ENCODE measurements at regions of chr7 and their contacts with region 1.

Region 1: DNA sequence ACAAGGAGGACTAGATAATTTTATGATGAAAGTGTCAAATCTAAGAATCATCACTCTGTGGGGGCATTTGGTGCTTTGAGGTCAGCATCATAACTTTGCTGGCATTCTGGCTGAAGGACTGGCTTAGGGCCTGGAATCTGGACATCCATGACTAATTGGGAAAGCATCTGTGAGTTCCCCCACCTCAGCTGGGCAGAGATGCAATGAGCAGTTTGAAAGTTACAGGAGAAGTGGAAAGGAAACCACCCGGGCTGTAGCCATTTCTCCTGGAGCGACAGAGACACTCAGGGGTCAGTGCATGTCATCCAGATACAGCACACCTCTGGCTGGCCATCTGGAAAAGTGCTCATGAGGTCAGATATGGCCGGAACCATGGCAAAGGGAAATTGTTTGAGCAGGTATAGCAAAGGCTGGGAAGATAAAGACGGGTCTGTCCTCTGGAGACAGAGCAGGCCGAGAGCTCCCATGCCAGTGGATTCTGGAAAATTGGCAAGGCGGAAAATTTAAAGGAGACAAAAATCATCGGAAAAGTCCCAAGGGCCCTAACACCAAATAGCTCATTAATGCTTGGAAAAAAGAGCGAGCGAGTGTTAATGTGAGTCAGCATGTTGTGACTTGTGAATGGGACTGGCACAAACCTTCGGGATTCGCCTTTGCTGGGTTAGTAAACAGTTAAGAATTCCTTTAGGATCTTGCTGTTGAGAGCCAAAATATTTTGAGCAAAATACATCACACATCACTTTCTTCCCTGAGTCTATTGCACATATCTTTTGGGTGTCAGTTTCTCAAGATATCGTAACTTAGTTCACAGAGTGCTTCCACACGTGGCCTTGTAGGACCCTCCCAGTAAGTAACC is 188.4 kb upstream of the AGK start:
- DNase-seq: peak in 3 of 5 donors; percentile 31 to 50 (median 33)
- ATAC-seq: peak; percentile 27 to 63 (median 58)
- H3K4me3 ChIP-seq: no peak overlapping the region
- H3K27ac ChIP-seq: peak overlapping the region; percentile 24 to 87 (median 62)
- H3K4me1 ChIP-seq: peaks cover 0 to 74% (median 26%) of the 10 kb centered on the region in 12 donors
- H3K27me3 ChIP-seq: no peaks in the 10 kb centered on the region
- CTCF ChIP-seq: no peak
- POLR2A ChIP-seq: no peak

Region 2: DNA sequence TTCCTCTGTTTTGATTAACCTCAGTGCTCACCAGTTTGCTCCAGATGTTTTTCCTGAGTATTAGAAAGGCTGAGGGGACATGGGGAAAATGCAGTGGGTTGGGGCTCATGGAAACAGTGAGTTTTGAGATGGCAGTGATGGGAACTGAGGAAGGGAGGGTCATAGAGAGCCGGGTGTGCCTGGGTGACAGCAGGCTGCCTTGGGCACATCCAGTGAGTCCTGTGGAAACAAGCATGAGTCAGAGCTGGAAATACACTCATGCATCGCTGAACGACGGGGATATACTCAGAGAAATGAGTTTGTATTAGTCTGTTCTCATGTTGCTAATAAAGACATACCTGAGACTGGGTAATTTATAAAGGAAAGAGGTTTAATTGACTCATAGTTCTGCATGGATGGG is 86.8 kb before region 1 on chr7:
- intact Hi-C with region 1: loop called in 3 of 10 experiments (anchors 5 to 10 kb)
- DNase-seq: peak in 1 of 5 donors; percentile 59
- ATAC-seq: peak in 3 of 4 donors; percentile 68 to 90 (median 86)
- H3K4me3 ChIP-seq: no peak overlapping the region
- H3K27ac ChIP-seq: no peak overlapping the region
- H3K4me1 ChIP-seq: peaks cover 0 to 15% (median 0%) of the 10 kb centered on the region in 12 donors
- H3K27me3 ChIP-seq: no peaks in the 10 kb centered on the region
- CTCF ChIP-seq: no peak
- POLR2A ChIP-seq: no peak

Region 3: GRCh38 chr7:141291541-141291940 is 71.3 kb before region 1 on chr7:
- intact Hi-C with region 1: loop called in 1 of 10 experiments (anchors 10 kb)
- DNase-seq: no peak
- ATAC-seq: no peak
- H3K4me3 ChIP-seq: no peak overlapping the region
- H3K27ac ChIP-seq: peak overlapping the region in 3 of 12 donors; percentile 3 to 19 (median 16)
- H3K4me1 ChIP-seq: peaks cover 0 to 44% (median 4%) of the 10 kb centered on the region in 12 donors
- H3K27me3 ChIP-seq: no peaks in the 10 kb centered on the region
- CTCF ChIP-seq: no peak
- POLR2A ChIP-seq: no peak

Region 4: DNA sequence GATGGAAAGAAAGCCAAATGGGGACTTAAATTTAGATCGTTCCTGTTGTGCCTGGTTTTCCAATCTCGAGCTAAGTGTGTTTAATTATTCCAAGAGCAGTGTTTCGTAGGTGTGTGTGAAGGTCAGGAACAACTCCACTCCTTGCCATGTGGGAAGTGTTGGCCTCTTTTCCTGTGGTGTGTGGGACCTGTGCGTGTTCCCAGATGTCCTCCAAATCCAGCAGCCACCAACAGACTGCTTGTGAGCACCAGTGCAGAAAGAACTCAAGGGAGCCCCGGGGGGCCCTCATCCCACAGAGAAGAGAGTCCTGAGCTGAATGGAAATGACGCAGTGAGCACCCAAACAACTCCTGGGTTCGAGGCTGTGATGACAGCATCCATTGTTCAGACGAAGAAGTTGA is 61.3 kb before region 1 on chr7:
- intact Hi-C with region 1: loop called in 4 of 10 experiments (anchors 1 to 5 kb)
- DNase-seq: peak in 2 of 5 donors; percentile 55 to 64
- ATAC-seq: peak; percentile 75 to 88 (median 82)
- H3K4me3 ChIP-seq: peak overlapping the region in 5 of 12 donors; percentile 6 to 46 (median 19)
- H3K27ac ChIP-seq: peak overlapping the region in 11 of 12 donors; percentile 51 to 92 (median 81)
- H3K4me1 ChIP-seq: peaks cover 0 to 48% (median 10%) of the 10 kb centered on the region in 12 donors
- H3K27me3 ChIP-seq: no peaks in the 10 kb centered on the region
- CTCF ChIP-seq: no peak
- POLR2A ChIP-seq: no peak